ENCODE measurements at regions of chr17 and their contacts with region 1.

Region 1: GRCh38 chr17:72120642-72121163 is at the start of gene SOX9:
- DNase-seq: peak; percentile 98
- H3K4me3 ChIP-seq: peak within 1 kb of the TSS; percentile 67 to 98 (median 96)
- H3K27ac ChIP-seq: peak within 1 kb of the TSS; percentile 88
- H3K4me1 ChIP-seq: peaks cover 55% of the 10 kb centered on the region
- H3K27me3 ChIP-seq: no peaks in the 10 kb centered on the region
- CTCF ChIP-seq: no peak
- total RNA-seq, gene SOX9: 77.4 to 81.9 TPM

Region 2: GRCh38 chr17:70767102-70767701 is 1353.5 kb before region 1 on chr17:
- CTCF ChIA-PET with region 1: no interaction called
- dilution Hi-C with region 1: no loop called
- in situ Hi-C with region 1: no loop called
- intact Hi-C with region 1: loop called (anchors 2 kb)
- DNase-seq: peak; percentile 9
- H3K4me3 ChIP-seq: no peak overlapping the region
- H3K27ac ChIP-seq: no peak overlapping the region
- H3K4me1 ChIP-seq: no peaks in the 10 kb centered on the region
- H3K27me3 ChIP-seq: no peaks in the 10 kb centered on the region
- CTCF ChIP-seq: peak; percentile 67 to 71

Region 3: DNA sequence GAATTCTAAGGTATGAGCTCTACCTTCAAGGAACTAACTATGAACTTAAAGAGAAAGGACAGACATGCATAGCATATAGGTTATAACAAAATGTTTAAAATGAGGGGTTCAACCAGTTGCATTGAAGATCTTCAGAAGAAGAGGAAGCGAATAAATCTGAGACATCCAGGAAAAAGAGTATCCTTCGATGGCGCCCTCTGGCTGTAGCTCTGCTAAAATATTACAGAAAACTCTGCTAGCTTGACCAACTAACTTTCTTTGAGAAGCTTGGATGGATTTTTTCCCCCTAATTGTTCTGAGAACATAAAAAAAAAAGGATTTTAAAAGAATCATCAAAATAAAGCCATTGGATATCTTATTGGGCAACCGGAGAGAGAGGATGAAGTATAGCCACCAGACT is 659.8 kb before region 1 on chr17:
- CTCF ChIA-PET with region 1: no interaction called
- dilution Hi-C with region 1: no loop called
- in situ Hi-C with region 1: loop called in 1 of 2 experiments (anchors 10 kb)
- intact Hi-C with region 1: no loop called
- DNase-seq: no peak
- H3K4me3 ChIP-seq: no peak overlapping the region
- H3K27ac ChIP-seq: no peak overlapping the region
- H3K4me1 ChIP-seq: peaks cover 41% of the 10 kb centered on the region
- H3K27me3 ChIP-seq: no peaks in the 10 kb centered on the region
- CTCF ChIP-seq: peak; percentile 20 to 36

Region 4: DNA sequence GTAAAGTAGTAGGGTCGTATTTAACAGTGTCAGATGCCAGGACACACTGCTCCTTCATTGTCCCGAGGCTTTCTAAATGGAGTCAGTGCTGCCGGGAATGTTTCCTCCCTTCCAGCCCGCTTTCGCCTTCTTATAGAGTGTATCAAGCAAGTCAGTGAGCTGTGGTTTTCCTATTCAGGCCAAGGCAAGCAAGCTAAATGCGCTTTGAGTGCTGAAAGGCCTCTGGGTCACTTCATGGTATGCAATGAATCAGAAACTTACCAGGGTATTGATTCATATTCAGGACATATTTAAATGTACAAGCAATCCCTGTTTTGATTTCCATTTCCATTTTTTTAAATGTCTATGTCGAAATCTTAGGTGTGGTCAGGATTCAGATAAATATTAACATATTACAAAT is 327.7 kb before region 1 on chr17:
- CTCF ChIA-PET with region 1: no interaction called
- dilution Hi-C with region 1: no loop called
- in situ Hi-C with region 1: no loop called
- intact Hi-C with region 1: loop called (anchors 10 kb)
- DNase-seq: peak; percentile 96
- H3K4me3 ChIP-seq: no peak overlapping the region
- H3K27ac ChIP-seq: peak overlapping the region; percentile 46
- H3K4me1 ChIP-seq: peaks cover 26% of the 10 kb centered on the region
- H3K27me3 ChIP-seq: no peaks in the 10 kb centered on the region
- CTCF ChIP-seq: no peak

Region 5: DNA sequence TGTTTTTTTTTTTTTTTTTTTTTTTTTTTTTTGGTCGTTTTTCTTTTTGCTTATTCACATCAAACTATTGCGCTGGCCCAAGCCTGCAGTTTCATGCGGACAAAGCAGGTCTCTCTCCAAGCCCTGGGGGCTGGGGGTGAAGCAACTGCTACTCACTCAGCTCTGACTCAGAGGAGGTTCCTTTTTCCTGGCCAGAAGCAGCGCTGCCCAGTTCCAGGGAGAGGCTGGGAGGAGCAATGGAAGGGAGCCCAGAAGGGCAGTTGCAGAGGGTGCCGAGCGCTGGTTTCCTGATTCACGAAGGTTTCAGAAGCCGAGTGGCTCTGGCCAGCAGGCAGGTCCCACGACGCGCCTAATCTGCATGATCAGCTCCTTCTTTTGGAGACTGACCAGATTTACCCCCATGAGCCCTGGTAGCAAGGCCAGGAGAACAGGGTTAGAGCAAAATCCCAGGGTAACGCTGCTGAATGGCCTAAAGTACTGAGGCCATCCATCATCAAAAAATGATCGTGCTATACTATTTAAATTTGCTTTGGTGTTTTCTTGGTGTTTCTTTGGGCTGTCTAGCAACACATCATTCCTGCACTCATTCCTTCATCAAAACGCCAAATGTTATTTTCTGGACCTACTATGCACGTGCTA is 144.6 kb before region 1 on chr17:
- CTCF ChIA-PET with region 1: no interaction called
- dilution Hi-C with region 1: no loop called
- in situ Hi-C with region 1: loop called in 1 of 2 experiments (anchors 10 kb)
- intact Hi-C with region 1: loop called (anchors 5 kb)
- DNase-seq: peak; percentile 98
- H3K4me3 ChIP-seq: peak overlapping the region in 1 of 3 experiments; percentile 27
- H3K27ac ChIP-seq: peak overlapping the region; percentile 87
- H3K4me1 ChIP-seq: peaks cover 34% of the 10 kb centered on the region
- H3K27me3 ChIP-seq: no peaks in the 10 kb centered on the region
- CTCF ChIP-seq: no peak

Region 6: GRCh38 chr17:72362376-72363088 is 241.8 kb after region 1 on chr17:
- CTCF ChIA-PET with region 1: no interaction called
- dilution Hi-C with region 1: no loop called
- in situ Hi-C with region 1: no loop called
- intact Hi-C with region 1: loop called (anchors 1 kb)
- DNase-seq: peak; percentile 98
- H3K4me3 ChIP-seq: no peak overlapping the region
- H3K27ac ChIP-seq: peak overlapping the region; percentile 89
- H3K4me1 ChIP-seq: peaks cover 47% of the 10 kb centered on the region
- H3K27me3 ChIP-seq: no peaks in the 10 kb centered on the region
- CTCF ChIP-seq: no peak

Region 7: DNA sequence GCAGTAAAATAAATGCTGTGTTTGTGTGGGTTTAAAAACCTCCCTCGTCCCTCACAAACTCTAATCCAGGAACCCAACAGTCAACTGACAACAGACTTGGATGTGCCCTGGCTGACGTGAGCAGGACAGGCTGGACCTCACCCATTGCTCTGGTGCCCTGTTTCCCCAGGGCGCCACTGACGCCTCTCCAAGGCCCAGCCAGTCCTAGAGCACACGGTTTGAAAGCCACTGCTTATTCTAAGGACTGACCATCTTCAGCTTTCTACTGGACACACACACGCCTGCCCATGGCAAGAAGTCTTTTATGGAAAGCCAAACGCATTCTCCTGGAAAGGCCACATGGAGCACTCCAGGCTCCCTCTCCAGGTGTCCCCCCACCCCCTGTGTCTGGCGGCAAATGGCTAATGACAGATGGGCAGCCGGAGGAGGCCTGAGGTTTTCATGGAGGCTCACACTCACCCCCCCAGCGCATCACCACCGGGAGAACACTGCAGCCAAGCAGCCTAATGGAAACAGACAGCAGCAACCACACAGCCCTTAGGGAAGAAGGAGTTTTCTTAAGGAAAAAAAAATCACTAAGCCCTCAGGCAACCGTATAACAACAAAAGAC is 319.3 kb after region 1 on chr17:
- CTCF ChIA-PET with region 1: no interaction called
- dilution Hi-C with region 1: no loop called
- in situ Hi-C with region 1: no loop called
- intact Hi-C with region 1: no loop called
- DNase-seq: no peak
- H3K4me3 ChIP-seq: no peak overlapping the region
- H3K27ac ChIP-seq: no peak overlapping the region
- H3K4me1 ChIP-seq: peaks cover 3% of the 10 kb centered on the region
- H3K27me3 ChIP-seq: no peaks in the 10 kb centered on the region
- CTCF ChIP-seq: no peak